ENCODE measurements at regions of chr3 and their contacts with region 1.

Region 1: GRCh38 chr3:143674100-143674968 is 173.9 kb downstream of the SLC9A9 start:
- DNase-seq: peak; percentile 76
- ATAC-seq: peak; percentile 89
- H3K4me3 ChIP-seq: 0 out of 2 replicates have a peak overlapping the region, but pooled peaks have one; percentile 39
- H3K27ac ChIP-seq: peak overlapping the region; percentile 81
- H3K4me1 ChIP-seq: peaks cover 10% of the 10 kb centered on the region
- H3K27me3 ChIP-seq: no peaks in the 10 kb centered on the region
- CTCF ChIP-seq: peak; percentile 89 to 96 (median 93)
- EP300 ChIP-seq: no peak
- POLR2A ChIP-seq: no peak
- RAD21 ChIP-seq: peak; percentile 100

Region 2: DNA sequence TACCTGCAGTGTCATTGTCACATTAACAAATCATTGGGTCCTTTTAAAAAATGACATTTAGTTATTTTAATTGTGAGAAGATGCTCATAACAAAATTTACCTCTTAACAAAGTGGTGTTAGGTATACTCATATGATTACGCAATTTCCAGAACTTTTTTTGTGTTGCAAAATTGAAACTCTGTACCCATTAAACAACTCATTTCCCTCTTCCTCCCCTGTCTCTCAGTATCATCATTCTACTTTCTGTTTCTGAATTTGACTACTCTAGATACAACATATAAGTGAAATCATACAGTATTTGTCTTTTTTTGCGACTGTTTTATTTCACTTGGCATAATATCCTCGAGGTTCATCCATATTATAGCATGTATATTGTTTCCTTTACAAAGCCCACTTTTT is 613.4 kb before region 1 on chr3:
- CTCF ChIA-PET with region 1: no interaction called
- POLR2A ChIA-PET with region 1: no interaction called
- RAD21 ChIA-PET with region 1: no interaction called
- SMC1A ChIA-PET with region 1: interaction called, 4 read pairs
- in situ Hi-C with region 1: no loop called
- intact Hi-C with region 1: loop called (anchors 2 kb)
- DNase-seq: peak; percentile 57
- ATAC-seq: peak; percentile 97
- H3K4me3 ChIP-seq: no peak overlapping the region
- H3K27ac ChIP-seq: peak overlapping the region; percentile 77
- H3K4me1 ChIP-seq: peaks cover 10% of the 10 kb centered on the region
- H3K27me3 ChIP-seq: no peaks in the 10 kb centered on the region
- CTCF ChIP-seq: no peak
- EP300 ChIP-seq: peak in 1 of 2 experiments; percentile 72; a peak in 1 of 4 replicates
- POLR2A ChIP-seq: no peak
- RAD21 ChIP-seq: no peak

Region 3: DNA sequence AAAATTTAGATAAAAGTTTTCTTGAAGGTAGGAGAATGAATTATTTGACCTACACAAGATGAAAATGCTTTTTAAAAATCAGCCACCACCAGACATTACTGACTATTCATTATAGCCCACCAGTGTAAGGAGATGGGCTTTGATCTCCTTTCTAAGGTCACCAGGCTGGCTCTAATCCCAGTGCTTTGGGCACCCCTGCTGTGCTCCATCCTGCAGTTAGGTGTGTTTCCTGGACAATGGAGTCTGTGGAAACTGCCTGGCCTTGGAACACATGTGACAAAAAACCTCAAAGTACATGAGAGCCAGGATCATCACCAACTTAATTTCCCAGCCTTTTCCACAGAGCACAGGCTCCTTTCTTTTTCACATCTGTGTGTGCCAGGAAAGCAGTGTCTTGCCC is 293.9 kb before region 1 on chr3:
- CTCF ChIA-PET with region 1: no interaction called
- POLR2A ChIA-PET with region 1: no interaction called
- RAD21 ChIA-PET with region 1: no interaction called
- SMC1A ChIA-PET with region 1: no interaction called
- in situ Hi-C with region 1: no loop called
- intact Hi-C with region 1: no loop called
- DNase-seq: no peak
- ATAC-seq: no peak
- H3K4me3 ChIP-seq: no peak overlapping the region
- H3K27ac ChIP-seq: no peak overlapping the region
- H3K4me1 ChIP-seq: no peaks in the 10 kb centered on the region
- H3K27me3 ChIP-seq: no peaks in the 10 kb centered on the region
- CTCF ChIP-seq: no peak
- EP300 ChIP-seq: no peak
- POLR2A ChIP-seq: no peak
- RAD21 ChIP-seq: no peak

Region 4: DNA sequence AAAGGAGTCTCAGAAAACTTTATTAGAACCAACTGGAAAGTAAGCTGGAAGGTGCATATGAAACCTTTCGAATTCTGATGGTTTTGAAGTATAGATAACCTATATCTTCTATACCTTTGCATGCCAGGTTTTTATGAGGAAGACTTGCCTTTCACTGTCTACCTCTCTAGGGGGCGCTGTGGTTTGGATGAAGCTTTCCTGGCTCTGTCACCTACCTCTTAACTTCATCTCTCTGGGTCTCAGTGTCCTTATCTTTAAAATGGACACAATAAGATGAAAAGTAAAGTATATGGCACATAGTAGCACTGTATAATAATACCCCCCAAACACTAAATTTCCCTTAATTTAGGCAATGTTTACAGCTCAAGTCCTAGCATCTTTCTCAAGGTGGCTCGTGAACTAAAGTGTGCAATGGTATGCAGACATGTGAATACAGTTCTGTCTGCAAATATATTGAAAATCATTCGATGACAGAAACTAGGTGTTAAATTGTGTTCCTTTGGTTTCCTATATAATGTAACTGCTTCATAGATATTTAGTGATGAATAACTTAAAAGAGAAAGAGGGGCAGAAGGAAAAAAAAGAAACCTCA is 240.5 kb before region 1 on chr3:
- CTCF ChIA-PET with region 1: interaction called, 27 read pairs
- POLR2A ChIA-PET with region 1: no interaction called
- RAD21 ChIA-PET with region 1: interaction called, 4 read pairs
- SMC1A ChIA-PET with region 1: interaction called, 11 read pairs
- in situ Hi-C with region 1: no loop called
- intact Hi-C with region 1: loop called (anchors 2 kb)
- DNase-seq: no peak
- ATAC-seq: peak; percentile 70
- H3K4me3 ChIP-seq: no peak overlapping the region
- H3K27ac ChIP-seq: no peak overlapping the region
- H3K4me1 ChIP-seq: no peaks in the 10 kb centered on the region
- H3K27me3 ChIP-seq: no peaks in the 10 kb centered on the region
- CTCF ChIP-seq: peak; percentile 61 to 67 (median 63); a peak in 5 of 6 replicates
- EP300 ChIP-seq: no peak
- POLR2A ChIP-seq: no peak
- RAD21 ChIP-seq: peak; percentile 72

Region 5: DNA sequence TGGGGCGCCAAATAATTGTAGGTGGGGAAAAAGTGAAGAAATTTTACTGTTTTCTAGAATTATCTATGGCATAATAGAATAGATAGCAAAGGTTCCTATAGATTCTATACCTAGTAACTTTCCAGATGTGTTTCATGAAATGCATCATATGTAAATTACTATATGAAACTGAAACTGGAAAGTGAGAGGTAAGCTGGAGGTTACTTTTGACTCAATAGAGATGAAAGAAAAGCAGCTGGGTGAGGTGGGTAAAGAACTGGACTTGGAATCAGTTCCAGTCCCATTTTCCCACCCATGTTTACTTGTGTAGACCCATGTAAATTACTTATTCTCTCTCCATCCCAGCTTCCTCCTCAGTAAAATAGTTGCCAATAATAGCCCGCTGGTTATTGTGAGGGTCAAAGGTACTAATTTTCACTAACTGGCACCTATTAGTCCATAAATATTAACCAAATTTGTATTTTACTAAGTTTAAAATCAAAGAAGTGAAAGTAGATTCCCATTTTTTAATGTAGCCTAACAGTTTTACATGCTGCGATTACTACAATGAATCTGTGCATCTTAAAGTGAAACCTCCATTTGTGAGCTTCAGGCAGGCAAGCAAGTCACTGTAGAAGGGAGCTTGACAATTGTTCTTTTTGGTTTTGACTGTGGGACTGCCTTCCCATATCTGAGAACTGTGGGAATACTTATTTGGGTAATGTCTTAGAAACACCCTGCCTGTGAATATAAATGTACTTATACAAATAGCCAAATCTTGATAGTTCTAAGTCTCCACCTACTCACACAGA is 138.1 kb before region 1 on chr3:
- CTCF ChIA-PET with region 1: interaction called, 6 read pairs
- POLR2A ChIA-PET with region 1: no interaction called
- RAD21 ChIA-PET with region 1: interaction called, 3 read pairs
- SMC1A ChIA-PET with region 1: interaction called, 3 read pairs
- in situ Hi-C with region 1: no loop called
- intact Hi-C with region 1: loop called (anchors 5 kb)
- DNase-seq: peak; percentile 43
- ATAC-seq: peak; percentile 94
- H3K4me3 ChIP-seq: peak overlapping the region; percentile 41; the same call in 1 of the 2 replicates
- H3K27ac ChIP-seq: peak overlapping the region; percentile 45
- H3K4me1 ChIP-seq: peaks cover 29% of the 10 kb centered on the region
- H3K27me3 ChIP-seq: no peaks in the 10 kb centered on the region
- CTCF ChIP-seq: no peak
- EP300 ChIP-seq: peak; percentile 56 to 76; a peak in 3 of 4 replicates
- POLR2A ChIP-seq: no peak
- RAD21 ChIP-seq: no peak

Region 6: GRCh38 chr3:143644370-143645089 is 29.8 kb before region 1 on chr3:
- CTCF ChIA-PET with region 1: interaction called, 44 read pairs
- POLR2A ChIA-PET with region 1: interaction called, 4 read pairs
- RAD21 ChIA-PET with region 1: interaction called, 7 read pairs
- SMC1A ChIA-PET with region 1: interaction called, 7 read pairs
- in situ Hi-C with region 1: no loop called
- intact Hi-C with region 1: loop called (anchors 2 kb)
- DNase-seq: peak; percentile 26
- ATAC-seq: peak; percentile 76
- H3K4me3 ChIP-seq: no peak overlapping the region
- H3K27ac ChIP-seq: no peak overlapping the region
- H3K4me1 ChIP-seq: 0 out of 2 replicates have a peak, but pooled peaks cover 4% of the 10 kb centered on the region
- H3K27me3 ChIP-seq: no peaks in the 10 kb centered on the region
- CTCF ChIP-seq: peak; percentile 43 to 69 (median 51); a peak in 4 of 6 replicates
- EP300 ChIP-seq: no peak
- POLR2A ChIP-seq: no peak
- RAD21 ChIP-seq: peak; percentile 86

Region 7: GRCh38 chr3:143657391-143657790 is 16.9 kb before region 1 on chr3:
- CTCF ChIA-PET with region 1: interaction called, 44 read pairs
- POLR2A ChIA-PET with region 1: no interaction called
- RAD21 ChIA-PET with region 1: no interaction called
- SMC1A ChIA-PET with region 1: interaction called, 5 read pairs
- in situ Hi-C with region 1: no loop called
- intact Hi-C with region 1: no loop called
- DNase-seq: no peak
- ATAC-seq: no peak
- H3K4me3 ChIP-seq: no peak overlapping the region
- H3K27ac ChIP-seq: no peak overlapping the region
- H3K4me1 ChIP-seq: no peaks in the 10 kb centered on the region
- H3K27me3 ChIP-seq: no peaks in the 10 kb centered on the region
- CTCF ChIP-seq: no peak
- EP300 ChIP-seq: no peak
- POLR2A ChIP-seq: no peak
- RAD21 ChIP-seq: no peak

Region 8: GRCh38 chr3:143685491-143685890 is 11.2 kb after region 1 on chr3:
- CTCF ChIA-PET with region 1: interaction called, 16 read pairs
- POLR2A ChIA-PET with region 1: no interaction called
- RAD21 ChIA-PET with region 1: interaction called, 4 read pairs
- SMC1A ChIA-PET with region 1: interaction called, 3 read pairs
- in situ Hi-C with region 1: no loop called
- intact Hi-C with region 1: no loop called
- DNase-seq: no peak
- ATAC-seq: no peak
- H3K4me3 ChIP-seq: no peak overlapping the region
- H3K27ac ChIP-seq: no peak overlapping the region
- H3K4me1 ChIP-seq: no peaks in the 10 kb centered on the region
- H3K27me3 ChIP-seq: no peaks in the 10 kb centered on the region
- CTCF ChIP-seq: no peak
- EP300 ChIP-seq: no peak
- POLR2A ChIP-seq: no peak
- RAD21 ChIP-seq: no peak

Region 9: DNA sequence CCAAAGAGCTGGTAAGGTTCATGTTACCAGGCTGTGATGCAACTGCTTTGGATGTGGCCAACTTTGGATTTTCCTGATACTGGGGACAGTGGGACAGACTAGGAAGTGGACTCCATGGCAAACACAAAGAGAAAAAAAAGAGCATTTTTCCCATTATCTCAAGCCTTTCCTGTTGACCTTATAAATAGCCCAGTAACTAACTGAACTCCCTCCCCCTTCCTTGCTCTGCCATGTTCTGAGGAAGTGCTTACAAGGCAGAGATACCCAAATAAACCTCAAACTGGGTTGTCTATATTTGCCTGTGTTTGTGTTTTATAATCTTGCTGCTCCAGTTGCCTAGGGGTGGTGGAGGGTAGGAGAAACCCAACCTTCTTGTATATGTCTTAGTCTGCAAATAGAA is 201.2 kb after region 1 on chr3:
- CTCF ChIA-PET with region 1: no interaction called
- POLR2A ChIA-PET with region 1: no interaction called
- RAD21 ChIA-PET with region 1: no interaction called
- SMC1A ChIA-PET with region 1: no interaction called
- in situ Hi-C with region 1: no loop called
- intact Hi-C with region 1: no loop called
- DNase-seq: no peak
- ATAC-seq: no peak
- H3K4me3 ChIP-seq: no peak overlapping the region
- H3K27ac ChIP-seq: no peak overlapping the region
- H3K4me1 ChIP-seq: no peaks in the 10 kb centered on the region
- H3K27me3 ChIP-seq: no peaks in the 10 kb centered on the region
- CTCF ChIP-seq: no peak
- EP300 ChIP-seq: no peak
- POLR2A ChIP-seq: no peak
- RAD21 ChIP-seq: no peak

Region 10: DNA sequence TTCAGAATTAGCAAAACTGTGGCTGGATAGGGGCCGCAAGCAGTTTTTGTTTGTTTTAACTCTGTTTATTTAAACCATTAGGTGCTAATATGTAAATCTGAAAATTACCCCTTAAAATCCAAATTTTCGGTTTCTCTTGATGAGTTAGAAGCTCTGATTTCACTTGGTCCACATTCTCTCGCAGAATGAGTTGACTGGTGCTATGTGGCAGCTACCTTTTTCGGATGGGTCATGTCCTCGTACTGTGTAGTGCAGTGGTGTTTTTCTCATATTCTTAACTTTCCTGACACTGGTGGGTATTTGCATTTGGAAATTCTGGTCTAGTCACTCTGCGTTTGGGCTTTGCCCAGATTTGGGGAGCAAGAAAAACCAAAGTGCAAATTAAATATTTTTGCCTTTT is 384.4 kb after region 1 on chr3:
- CTCF ChIA-PET with region 1: no interaction called
- POLR2A ChIA-PET with region 1: no interaction called
- RAD21 ChIA-PET with region 1: no interaction called
- SMC1A ChIA-PET with region 1: no interaction called
- in situ Hi-C with region 1: no loop called
- intact Hi-C with region 1: no loop called
- DNase-seq: peak; percentile 20
- ATAC-seq: 0 out of 3 replicates have a peak, but pooled peaks have one; percentile 37
- H3K4me3 ChIP-seq: no peak overlapping the region
- H3K27ac ChIP-seq: no peak overlapping the region
- H3K4me1 ChIP-seq: no peaks in the 10 kb centered on the region
- H3K27me3 ChIP-seq: no peaks in the 10 kb centered on the region; a peak in 1 of 4 replicates
- CTCF ChIP-seq: no peak
- EP300 ChIP-seq: no peak
- POLR2A ChIP-seq: no peak
- RAD21 ChIP-seq: no peak

Measured in GM12878 (cell line).